GM12878 (cell line): ENCODE measurements at regions of chr2 and their contacts with region 1.

Region 1: DNA sequence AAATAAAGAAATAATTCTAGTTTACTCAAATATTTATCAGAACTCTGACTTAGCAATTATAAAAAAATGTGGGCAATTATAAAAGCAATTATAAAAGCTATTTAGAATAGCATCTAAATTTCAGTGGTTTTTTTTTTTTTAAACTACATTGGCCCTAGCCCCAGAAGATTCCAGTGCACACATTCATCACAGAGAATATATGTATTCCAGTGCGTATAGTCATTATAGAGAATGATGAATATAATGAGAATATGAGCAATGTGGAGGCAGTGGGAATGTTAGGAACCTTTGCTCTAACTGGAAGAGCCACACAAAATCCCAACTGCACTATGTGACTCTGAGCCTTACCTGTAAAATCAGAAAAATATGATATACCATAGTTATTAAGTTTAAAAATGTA is 10.5 kb downstream of the MAP3K2 start:
- DNase-seq: no peak
- ATAC-seq: no peak
- H3K4me3 ChIP-seq: no peak overlapping the region
- H3K27ac ChIP-seq: no peak overlapping the region
- H3K4me1 ChIP-seq: no peaks in the 10 kb centered on the region
- H3K27me3 ChIP-seq: no peaks in the 10 kb centered on the region
- CTCF ChIP-seq: no peak
- EP300 ChIP-seq: no peak
- POLR2A ChIP-seq: no peak
- RAD21 ChIP-seq: no peak

Region 2: DNA sequence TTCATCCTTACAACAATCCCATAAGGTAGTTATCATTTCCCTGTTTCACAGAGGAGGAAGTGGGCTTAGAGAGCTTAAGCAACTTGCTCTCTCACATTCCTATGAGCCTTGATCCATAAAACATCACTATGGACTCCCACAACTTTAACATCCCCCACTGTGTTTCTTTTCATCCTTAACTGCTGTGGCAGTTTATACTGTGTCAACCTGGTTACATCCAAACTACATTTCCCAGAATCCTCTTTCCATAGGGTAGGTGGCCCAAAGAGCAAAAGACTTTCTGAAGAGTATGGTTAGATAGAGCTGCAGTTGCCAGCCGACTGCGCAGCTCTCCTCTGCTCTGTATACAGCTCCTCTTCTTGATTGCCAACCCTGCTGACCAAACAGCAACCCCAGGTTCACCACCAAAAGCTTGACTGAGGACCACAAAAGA is 12.0 kb before region 1 on chr2:
- CTCF ChIA-PET with region 1: no interaction called
- POLR2A ChIA-PET with region 1: no interaction called
- RAD21 ChIA-PET with region 1: no interaction called
- SMC1A ChIA-PET with region 1: interaction called, 10 read pairs
- in situ Hi-C with region 1: no loop called
- intact Hi-C with region 1: no loop called
- DNase-seq: no peak
- ATAC-seq: peak; percentile 36
- H3K4me3 ChIP-seq: no peak overlapping the region
- H3K27ac ChIP-seq: no peak overlapping the region
- H3K4me1 ChIP-seq: peaks cover 3% of the 10 kb centered on the region; the same call in 1 of the 2 replicates
- H3K27me3 ChIP-seq: no peaks in the 10 kb centered on the region
- CTCF ChIP-seq: no peak
- EP300 ChIP-seq: no peak
- POLR2A ChIP-seq: no peak
- RAD21 ChIP-seq: no peak

Region 3: DNA sequence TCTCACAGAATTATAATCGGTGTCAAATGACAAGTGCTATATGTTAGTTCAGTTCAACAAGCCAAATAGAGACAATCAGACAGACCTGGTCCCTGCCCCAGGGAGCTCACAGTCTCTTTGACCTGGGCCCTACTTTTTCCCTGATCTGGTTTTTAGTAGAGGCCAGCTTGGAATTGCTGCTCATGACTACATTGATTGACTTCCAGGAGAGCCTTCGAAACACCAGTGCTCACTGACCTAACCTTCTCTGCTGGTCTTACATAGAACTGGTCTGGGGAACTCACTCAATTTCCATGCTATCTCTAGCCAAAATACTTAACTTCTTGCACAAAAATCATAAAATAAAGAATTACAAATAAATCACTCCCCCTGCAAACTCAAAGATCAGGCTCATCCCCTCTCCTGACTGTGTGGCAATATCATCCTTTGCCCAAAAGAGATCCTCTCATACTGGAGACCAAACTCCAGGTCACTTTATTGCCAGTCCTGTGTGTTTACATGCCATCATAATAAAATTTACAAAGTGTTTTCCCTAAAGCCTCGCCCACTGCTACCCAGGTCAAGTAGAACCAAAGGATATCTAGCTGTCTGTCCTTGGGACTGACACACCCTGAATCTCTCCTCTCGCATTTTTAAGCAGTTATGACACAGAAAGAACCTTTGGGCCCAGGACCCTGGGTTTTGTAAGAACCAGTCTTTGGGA is 94.2 kb after region 1 on chr2:
- CTCF ChIA-PET with region 1: no interaction called
- POLR2A ChIA-PET with region 1: no interaction called
- RAD21 ChIA-PET with region 1: no interaction called
- SMC1A ChIA-PET with region 1: no interaction called
- in situ Hi-C with region 1: no loop called
- intact Hi-C with region 1: no loop called
- DNase-seq: no peak
- ATAC-seq: no peak
- H3K4me3 ChIP-seq: no peak overlapping the region
- H3K27ac ChIP-seq: no peak overlapping the region
- H3K4me1 ChIP-seq: no peaks in the 10 kb centered on the region
- H3K27me3 ChIP-seq: no peaks in the 10 kb centered on the region
- CTCF ChIP-seq: no peak
- EP300 ChIP-seq: no peak
- POLR2A ChIP-seq: no peak
- RAD21 ChIP-seq: no peak